Sciatic nerve (tissue), 2 donors: ENCODE measurements at regions of chrX and their contacts with region 1.

Region 1: DNA sequence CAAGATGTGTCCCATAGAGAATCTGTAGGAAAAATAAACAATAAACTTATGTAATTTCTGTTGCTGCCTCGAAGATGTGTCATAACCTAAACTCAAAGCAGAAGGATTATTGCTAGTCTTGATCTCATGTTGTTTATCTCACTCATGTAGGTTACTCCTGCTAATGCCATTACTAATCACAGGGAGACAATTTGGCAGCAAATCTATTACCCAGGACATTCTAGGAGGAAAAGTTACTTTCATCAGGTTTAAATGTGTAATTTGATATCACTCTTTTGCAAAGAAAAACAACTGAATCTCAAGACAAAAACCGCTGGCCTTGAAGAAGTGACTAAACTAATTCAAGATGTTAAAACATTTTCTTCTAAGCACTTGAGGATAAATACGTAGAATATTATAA is 34.0 kb downstream of the LDOC1 start:
- DNase-seq: no peak
- ATAC-seq: no peak

Region 2: GRCh38 chrX:140249088-140249487 is 893.9 kb before region 1 on chrX:
- intact Hi-C with region 1: no loop called
- DNase-seq: no peak
- ATAC-seq: no peak

Region 3: GRCh38 chrX:141158084-141158483 is 15.1 kb after region 1 on chrX:
- intact Hi-C with region 1: loop called (anchors 1 kb)
- DNase-seq: no peak
- ATAC-seq: no peak

Region 4: DNA sequence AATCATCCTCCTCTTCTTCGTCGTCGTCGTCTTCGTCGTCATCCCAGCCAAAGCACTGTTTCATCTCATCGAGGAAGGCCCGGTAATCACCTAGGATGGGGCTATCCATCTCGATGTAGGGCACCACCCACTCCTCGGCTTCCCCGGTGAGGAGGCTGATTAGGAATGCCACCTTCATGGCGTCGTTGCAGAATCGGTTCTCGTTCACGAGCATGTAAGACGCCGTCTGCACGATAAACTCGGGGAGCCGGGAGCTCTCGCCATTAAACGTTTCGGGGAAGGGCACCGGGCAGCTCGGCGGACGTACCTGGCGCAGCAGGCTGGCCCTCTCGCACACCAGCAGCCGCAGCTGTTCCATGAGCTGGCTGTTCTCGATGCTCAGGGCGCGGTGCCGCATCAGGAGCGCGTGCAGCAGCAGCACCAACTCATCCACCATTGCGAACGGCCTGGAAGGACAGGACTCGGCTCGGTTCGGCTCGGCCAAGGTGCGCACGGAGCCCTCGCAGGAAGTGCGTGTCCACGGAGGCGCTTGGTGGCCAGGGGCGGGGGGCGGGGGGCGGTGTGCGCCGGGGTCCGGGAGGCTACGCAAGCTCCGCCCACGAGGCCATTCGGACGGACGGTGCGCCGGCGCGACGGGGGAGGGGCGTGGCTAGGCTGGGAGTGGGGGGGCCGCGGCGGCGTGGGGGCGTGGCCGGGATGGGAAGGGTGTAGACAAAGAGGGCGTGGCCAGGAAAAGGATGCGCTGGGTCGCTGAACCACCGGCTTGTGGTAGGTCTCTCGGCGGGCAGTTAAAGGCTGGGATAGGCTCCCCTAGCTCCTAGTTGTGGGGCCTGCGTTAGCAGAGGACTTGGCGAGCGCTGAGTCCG is 33.9 kb after region 1 on chrX and contains the start of gene LDOC1:
- intact Hi-C with region 1: no loop called
- DNase-seq: peak; percentile 88
- ATAC-seq: peak; percentile 95
- total RNA-seq, gene LDOC1: 28.3 TPM